ENCODE measurements at regions of chr5 and their contacts with region 1.

Region 1: DNA sequence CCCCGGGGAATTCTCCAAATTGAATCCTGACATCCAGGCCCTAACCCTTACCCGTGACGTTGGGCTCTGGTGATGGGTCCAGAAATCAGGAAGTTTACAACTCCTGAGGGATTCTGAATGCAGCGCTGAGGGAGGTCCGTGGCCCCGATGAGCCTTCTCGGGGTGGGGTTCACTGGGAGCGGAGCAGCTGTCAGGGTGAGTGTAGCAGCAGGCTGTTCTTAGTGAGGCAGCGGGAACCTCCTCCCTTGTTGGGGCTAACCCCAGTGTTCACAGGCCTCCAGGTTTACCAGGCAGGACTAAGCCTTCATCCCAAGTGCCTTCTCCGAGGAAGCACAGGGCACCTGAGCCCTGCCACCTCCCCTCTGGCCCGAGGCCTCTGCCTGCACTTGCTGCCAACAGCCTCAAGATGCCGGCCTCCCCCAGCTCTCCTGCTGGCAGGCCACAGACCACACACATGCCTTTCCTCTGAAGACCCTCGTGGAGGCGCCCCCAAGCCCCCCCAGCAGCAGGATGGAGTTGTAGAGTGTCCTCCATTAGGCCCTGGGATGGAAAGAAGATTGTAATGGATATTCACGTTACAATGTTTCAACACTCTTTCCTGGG is 7.3 kb upstream of the ADAMTS16 start:
- DNase-seq: no peak
- ATAC-seq: no peak
- H3K4me3 ChIP-seq: no peak overlapping the region
- H3K27ac ChIP-seq: no peak overlapping the region
- H3K4me1 ChIP-seq: no peaks in the 10 kb centered on the region
- H3K27me3 ChIP-seq: no peaks in the 10 kb centered on the region
- CTCF ChIP-seq: no peak
- POLR2A ChIP-seq: no peak

Region 2: GRCh38 chr5:4815002-4815401 is 317.8 kb before region 1 on chr5:
- intact Hi-C with region 1: no loop called
- DNase-seq: no peak
- ATAC-seq: no peak
- H3K4me3 ChIP-seq: no peak overlapping the region
- H3K27ac ChIP-seq: no peak overlapping the region
- H3K4me1 ChIP-seq: no peaks in the 10 kb centered on the region
- H3K27me3 ChIP-seq: no peaks in the 10 kb centered on the region
- CTCF ChIP-seq: no peak
- POLR2A ChIP-seq: no peak

Region 3: GRCh38 chr5:5416733-5417132 is 283.9 kb after region 1 on chr5:
- intact Hi-C with region 1: loop called in 1 of 10 experiments (anchors 5 kb)
- DNase-seq: no peak
- ATAC-seq: no peak
- H3K4me3 ChIP-seq: no peak overlapping the region
- H3K27ac ChIP-seq: no peak overlapping the region
- H3K4me1 ChIP-seq: peaks cover 0 to 15% (median 9%) of the 10 kb centered on the region in 12 donors
- H3K27me3 ChIP-seq: no peaks in the 10 kb centered on the region
- CTCF ChIP-seq: no peak
- POLR2A ChIP-seq: no peak

Measured in heart left ventricle (tissue), 16 donors.